ENCODE measurements at regions of chr1 and their contacts with region 1.

Region 1: DNA sequence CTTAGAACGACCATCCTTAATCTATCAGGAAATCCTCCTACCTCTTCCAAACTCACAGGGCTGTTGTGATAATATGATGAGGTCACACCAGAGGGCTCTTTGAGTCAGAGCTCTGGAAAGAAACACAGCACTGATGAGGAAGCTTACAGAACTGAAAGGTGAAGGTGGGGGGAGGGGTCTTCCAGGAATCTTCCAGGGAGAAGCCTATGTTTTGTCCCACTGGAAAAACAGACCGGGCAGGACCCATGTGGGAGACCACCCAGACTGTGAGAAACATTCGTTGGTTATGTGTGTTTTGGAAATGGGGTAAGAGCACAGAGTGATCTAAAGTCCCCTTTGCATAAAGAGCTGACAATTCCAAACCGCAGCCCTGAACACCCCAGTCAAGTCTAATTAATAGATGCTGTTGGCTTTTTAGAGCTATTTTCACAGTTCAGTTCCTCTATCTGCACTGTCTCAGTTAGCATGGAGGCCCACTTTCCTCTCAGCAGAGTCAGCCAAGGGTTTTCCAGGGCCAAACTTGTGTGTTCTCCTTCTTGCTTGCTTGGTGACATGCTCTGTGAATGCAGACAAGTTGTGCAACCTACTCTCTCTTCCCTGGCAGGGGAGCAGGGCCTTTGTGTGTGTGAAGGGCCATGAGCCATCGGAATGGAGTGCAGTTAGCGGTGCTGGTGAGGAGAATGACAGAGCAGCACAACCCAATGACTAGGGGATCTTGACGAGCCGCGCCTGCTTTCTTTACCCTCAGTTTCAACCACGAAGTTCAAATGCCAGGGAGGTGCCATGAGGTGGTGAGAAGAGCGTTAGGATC is 12.3 kb downstream of the PHLDA3 start:
- DNase-seq: no peak
- H3K4me3 ChIP-seq: no peak overlapping the region
- H3K27ac ChIP-seq: no peak overlapping the region
- H3K4me1 ChIP-seq: peaks cover 2 to 9% (median 5%) of the 10 kb centered on the region in 4 experiments
- H3K27me3 ChIP-seq: no peaks in the 10 kb centered on the region
- CTCF ChIP-seq: no peak
- EP300 ChIP-seq: no peak
- POLR2A ChIP-seq: no peak
- RAD21 ChIP-seq: no peak

Region 2: GRCh38 chr1:201358596-201358995 is 98.1 kb before region 1 on chr1:
- CTCF ChIA-PET with region 1: no interaction called
- POLR2A ChIA-PET with region 1: no interaction called
- DNase-seq: no peak
- H3K4me3 ChIP-seq: no peak overlapping the region
- H3K27ac ChIP-seq: no peak overlapping the region
- H3K4me1 ChIP-seq: peaks cover 0 to 5% (median under 1%) of the 10 kb centered on the region in 4 experiments; a peak in 5 of 7 replicates
- H3K27me3 ChIP-seq: no peaks in the 10 kb centered on the region
- CTCF ChIP-seq: no peak
- EP300 ChIP-seq: no peak
- POLR2A ChIP-seq: no peak
- RAD21 ChIP-seq: no peak

Region 3: GRCh38 chr1:201385299-201385891 is 71.3 kb before region 1 on chr1:
- CTCF ChIA-PET with region 1: interaction called, 10 read pairs
- POLR2A ChIA-PET with region 1: no interaction called
- DNase-seq: peak; percentile 38 to 95
- H3K4me3 ChIP-seq: no peak overlapping the region
- H3K27ac ChIP-seq: no peak overlapping the region
- H3K4me1 ChIP-seq: peaks cover 0 to 2% (median 0%) of the 10 kb centered on the region in 4 experiments; a peak in 1 of 7 replicates
- H3K27me3 ChIP-seq: no peaks in the 10 kb centered on the region
- CTCF ChIP-seq: peak; percentile 92 to 99 (median 98)
- EP300 ChIP-seq: no peak
- POLR2A ChIP-seq: no peak
- RAD21 ChIP-seq: peak; percentile 74 to 84

Region 4: DNA sequence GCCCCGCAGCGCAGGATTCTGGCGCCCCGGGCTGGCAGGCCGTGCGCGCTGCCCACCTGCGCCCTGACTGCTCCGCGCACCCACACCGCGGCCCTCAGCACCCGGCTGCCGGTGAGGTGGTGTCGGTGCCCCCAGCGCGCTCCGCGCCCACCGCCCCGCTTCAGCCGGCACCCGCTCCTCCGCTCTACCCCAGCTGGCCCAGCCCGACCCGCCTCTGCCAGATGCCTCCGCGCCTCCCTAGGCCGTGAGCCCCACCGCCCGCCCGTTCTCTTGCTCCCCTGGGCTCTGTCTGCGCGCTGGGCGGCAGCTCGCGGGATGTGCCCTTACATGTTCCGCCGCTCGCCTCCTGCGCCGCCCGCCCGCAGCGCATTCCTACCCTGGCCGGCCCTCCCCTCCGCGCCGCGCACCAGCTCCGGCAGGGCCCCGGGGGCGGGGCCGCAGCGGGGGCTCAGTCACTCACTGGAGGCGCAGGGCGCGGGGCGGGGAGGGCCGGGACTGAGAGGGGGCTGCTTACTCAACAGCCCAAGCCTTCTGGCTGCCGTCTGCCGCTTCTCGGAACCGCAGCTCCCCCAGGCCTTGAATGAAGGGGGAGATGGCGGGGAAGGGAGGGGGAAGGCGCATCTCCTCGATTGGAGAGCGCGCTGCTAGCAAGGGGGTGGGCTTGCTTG is 12.3 kb after region 1 on chr1 and contains the start of gene PHLDA3:
- CTCF ChIA-PET with region 1: interaction called, 155 read pairs
- POLR2A ChIA-PET with region 1: interaction called, 11 read pairs
- DNase-seq: peak; percentile 77 to 82
- H3K4me3 ChIP-seq: peak within 1 kb of the TSS; percentile 64 to 75 (median 69)
- H3K27ac ChIP-seq: no peak within 1 kb of the TSS; the same call in 1 of the 2 replicates
- H3K4me1 ChIP-seq: peaks cover 0 to 19% (median 11%) of the 10 kb centered on the region in 4 experiments; a peak in 6 of 7 replicates
- H3K27me3 ChIP-seq: peaks cover 5 to 35% (median 31%) of the 10 kb centered on the region in 4 experiments
- CTCF ChIP-seq: no peak
- EP300 ChIP-seq: no peak
- POLR2A ChIP-seq: no peak; a peak in 1 of 3 replicates
- RAD21 ChIP-seq: no peak
- total RNA-seq, gene PHLDA3: 27.5 and 27.7 TPM in 2 replicates

Region 5: DNA sequence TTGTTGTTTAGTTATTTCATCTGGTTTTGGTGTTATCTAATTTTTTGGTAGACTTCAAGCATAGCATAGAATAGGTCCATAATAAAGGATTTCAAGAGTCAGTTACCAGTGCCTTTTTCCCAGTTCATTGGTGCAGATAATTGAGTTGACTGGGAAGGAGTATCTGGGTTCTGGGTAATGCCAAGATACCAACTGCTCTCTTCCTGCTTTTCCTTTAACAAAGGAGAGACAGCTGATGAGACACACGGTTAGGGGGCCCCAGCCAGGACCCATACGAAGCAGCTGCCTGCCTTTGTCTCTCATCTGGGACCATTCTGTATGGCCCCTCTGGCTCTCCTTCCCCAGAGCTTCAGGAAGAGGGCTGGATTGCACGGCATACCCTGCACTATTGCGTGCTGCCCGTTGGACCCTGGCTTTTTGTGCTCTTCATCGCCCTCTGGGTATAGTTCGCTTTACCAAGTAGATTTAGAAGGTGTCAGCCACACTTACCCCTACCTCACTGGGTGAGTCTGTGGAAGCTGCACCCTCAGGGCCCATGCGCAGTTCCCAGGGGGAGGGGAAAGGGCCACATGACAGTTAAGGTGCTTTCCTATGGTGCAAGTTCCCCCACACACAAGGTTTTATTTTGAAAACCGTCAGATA is 89.3 kb after region 1 on chr1:
- CTCF ChIA-PET with region 1: no interaction called
- POLR2A ChIA-PET with region 1: no interaction called
- DNase-seq: no peak
- H3K4me3 ChIP-seq: no peak overlapping the region
- H3K27ac ChIP-seq: no peak overlapping the region
- H3K4me1 ChIP-seq: peaks cover 0 to 2% (median 2%) of the 10 kb centered on the region in 4 experiments; a peak in 3 of 7 replicates
- H3K27me3 ChIP-seq: peaks cover 0 to 8% (median 5%) of the 10 kb centered on the region in 4 experiments; a peak in 6 of 7 replicates
- CTCF ChIP-seq: peak; percentile 37 to 48 (median 46)
- EP300 ChIP-seq: no peak
- POLR2A ChIP-seq: no peak
- RAD21 ChIP-seq: peak in 1 of 2 experiments; percentile 26; a peak in 2 of 4 replicates

Measured in H1 (cell line).